Astrocyte of the cerebellum (primary cell): ENCODE measurements at regions of chr3 and their contacts with region 1.

Region 1: GRCh38 chr3:45665101-45665572 is 24.1 kb upstream of the SACM1L start:
- DNase-seq: no peak
- H3K4me3 ChIP-seq: no peak overlapping the region
- CTCF ChIP-seq: peak; percentile 45

Region 2: DNA sequence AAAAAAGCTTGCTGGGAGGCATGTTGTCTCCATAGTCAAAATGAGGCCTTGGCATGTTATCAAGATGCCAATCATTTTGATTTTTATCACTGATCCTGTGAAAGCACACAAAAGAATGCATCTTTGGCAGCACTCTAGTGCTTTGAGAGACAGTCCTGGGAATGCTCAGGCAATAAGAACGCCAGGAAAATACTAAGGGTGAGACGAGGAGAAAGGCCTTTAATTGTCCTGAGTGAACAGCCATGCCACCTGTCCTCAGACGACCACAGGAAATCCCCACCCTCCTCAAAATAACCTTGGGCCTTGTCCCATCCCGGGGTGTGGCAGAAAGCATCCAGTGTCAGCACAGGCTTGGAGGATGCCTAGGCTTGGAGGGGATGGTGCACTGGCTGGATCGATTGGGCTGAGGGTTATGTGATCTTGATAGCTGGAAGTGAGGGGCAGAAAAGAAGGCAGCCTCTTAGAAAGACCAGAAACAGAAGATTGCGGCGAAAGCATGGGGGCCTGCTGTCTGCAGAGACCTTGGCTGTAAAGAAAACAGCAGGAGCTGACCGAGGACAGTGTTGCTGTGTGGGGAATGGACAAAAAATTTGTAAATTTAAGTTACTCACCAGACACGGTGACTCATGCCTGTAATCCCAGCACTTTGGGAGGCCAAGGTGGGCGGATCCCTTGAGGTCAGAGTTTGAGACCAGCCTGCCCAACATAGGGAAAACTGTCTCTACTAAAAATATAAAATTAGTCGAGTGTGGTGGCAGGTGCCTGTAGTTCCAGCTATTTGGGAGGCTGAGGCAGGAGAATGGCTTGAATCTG is 446.4 kb before region 1 on chr3:
- in situ Hi-C with region 1: loop called (anchors 5 kb)
- DNase-seq: no peak
- H3K4me3 ChIP-seq: no peak overlapping the region
- CTCF ChIP-seq: no peak